ENCODE measurements at regions of chr1 and their contacts with region 1.

Region 1: DNA sequence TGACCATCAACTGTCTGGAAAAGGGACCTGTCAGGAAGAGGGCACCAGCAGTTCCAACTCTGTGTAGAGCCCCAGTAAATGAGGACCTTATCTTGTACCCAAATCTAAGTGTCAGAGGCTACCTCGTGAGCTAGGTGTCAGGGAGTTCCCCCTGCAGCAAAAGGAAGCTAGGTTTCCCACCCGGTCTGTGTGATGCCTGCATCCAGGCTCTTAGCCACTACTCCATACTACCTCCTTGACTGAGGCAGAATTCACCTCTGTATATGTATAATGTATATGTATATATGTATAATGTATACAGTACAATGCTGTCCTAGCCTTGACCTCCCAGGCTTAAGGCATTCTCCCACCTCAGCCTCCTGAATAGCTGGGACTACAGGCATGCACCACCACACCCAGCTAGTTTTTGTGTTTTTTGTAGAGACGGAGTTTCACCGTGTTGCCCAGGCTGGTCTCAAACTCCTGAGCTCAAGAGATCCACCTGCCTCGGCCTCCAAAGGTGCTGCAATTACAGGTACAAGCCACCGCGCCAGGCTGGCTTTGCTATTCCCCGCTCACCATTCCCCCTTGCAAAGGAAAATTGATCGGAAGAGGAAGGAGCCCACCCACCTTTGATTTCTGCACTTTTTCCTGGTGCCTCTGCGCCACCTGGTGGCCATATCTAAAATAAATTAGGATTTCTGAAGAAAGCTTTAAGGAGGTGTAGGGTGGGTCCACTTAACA is 15.7 kb upstream of the LUZP1 start:
- DNase-seq: no peak
- H3K4me3 ChIP-seq: no peak overlapping the region
- H3K27ac ChIP-seq: no peak overlapping the region
- H3K4me1 ChIP-seq: peaks cover 19% of the 10 kb centered on the region
- H3K27me3 ChIP-seq: no peaks in the 10 kb centered on the region
- CTCF ChIP-seq: peak; percentile 48 to 75

Region 2: DNA sequence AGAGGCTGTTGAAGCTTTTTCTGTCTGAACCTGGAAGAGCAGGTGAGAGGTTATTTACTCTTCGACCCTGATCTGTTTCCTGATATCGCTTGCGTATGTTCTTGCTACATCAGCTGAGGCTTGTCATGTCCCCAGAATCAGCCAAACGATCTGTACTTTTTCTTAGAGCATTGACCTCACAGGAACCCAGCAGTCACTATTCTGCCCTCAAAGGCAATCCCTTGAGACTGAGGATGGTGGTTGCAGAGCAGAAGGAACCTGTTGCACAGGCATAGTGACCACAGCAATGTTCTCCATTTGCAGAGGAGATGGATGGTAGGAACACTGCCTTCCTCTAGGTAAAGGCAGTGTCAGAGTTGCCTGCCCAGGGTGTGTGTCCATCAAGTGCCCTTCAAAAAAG is 200.4 kb before region 1 on chr1:
- CTCF ChIA-PET with region 1: no interaction called
- dilution Hi-C with region 1: loop called (anchors 5 kb)
- in situ Hi-C with region 1: loop called (anchors 5 to 10 kb)
- intact Hi-C with region 1: no loop called
- DNase-seq: no peak
- H3K4me3 ChIP-seq: no peak overlapping the region
- H3K27ac ChIP-seq: no peak overlapping the region
- H3K4me1 ChIP-seq: no peaks in the 10 kb centered on the region
- H3K27me3 ChIP-seq: no peaks in the 10 kb centered on the region
- CTCF ChIP-seq: no peak

Region 3: GRCh38 chr1:23098463-23099170 is 85.8 kb before region 1 on chr1:
- CTCF ChIA-PET with region 1: interaction called, 23 read pairs
- dilution Hi-C with region 1: no loop called
- in situ Hi-C with region 1: loop called (anchors 5 kb)
- intact Hi-C with region 1: loop called (anchors 1 kb)
- DNase-seq: peak; percentile 65
- H3K4me3 ChIP-seq: no peak overlapping the region
- H3K27ac ChIP-seq: no peak overlapping the region
- H3K4me1 ChIP-seq: peaks cover 59% of the 10 kb centered on the region
- H3K27me3 ChIP-seq: no peaks in the 10 kb centered on the region
- CTCF ChIP-seq: peak; percentile 92 to 93

Region 4: DNA sequence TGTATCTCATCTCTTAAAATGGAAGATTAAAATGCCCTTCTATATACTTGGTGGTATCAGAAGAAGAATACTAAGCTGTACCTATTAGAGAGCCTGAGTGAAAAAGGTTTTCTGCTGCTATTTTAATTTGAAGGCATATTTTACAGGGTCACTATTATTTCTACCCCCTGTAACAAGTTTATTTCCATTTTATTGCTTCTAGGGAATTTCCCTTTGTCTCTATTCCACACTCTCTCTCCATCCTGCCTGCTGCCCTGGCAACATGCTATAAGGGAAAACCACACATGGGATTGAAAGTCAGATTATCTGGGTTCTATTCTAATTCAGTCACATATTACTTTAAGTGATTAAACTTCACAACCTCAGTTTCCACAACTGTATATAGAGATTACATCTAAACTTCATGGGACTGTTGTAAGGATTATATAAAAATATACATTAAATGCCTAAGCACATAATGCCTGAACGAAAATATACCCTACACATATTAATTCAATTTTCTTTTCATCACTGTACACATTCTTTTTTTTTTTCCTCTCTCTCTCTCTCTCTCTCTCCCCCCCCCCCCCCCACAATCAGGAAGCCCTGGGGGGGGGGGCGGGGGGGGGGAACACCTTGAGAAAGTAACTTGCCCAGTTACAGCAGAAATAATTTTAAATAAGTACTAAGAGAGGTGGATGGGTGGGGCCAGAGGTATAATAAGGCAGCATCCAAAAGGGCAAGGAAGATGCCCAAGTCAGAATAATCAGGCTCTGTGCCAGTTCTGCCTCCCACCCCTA is 67.3 kb before region 1 on chr1:
- CTCF ChIA-PET with region 1: no interaction called
- dilution Hi-C with region 1: no loop called
- in situ Hi-C with region 1: no loop called
- intact Hi-C with region 1: no loop called
- DNase-seq: no peak
- H3K4me3 ChIP-seq: no peak overlapping the region
- H3K27ac ChIP-seq: no peak overlapping the region
- H3K4me1 ChIP-seq: peaks cover 21% of the 10 kb centered on the region
- H3K27me3 ChIP-seq: no peaks in the 10 kb centered on the region
- CTCF ChIP-seq: no peak

Region 5: DNA sequence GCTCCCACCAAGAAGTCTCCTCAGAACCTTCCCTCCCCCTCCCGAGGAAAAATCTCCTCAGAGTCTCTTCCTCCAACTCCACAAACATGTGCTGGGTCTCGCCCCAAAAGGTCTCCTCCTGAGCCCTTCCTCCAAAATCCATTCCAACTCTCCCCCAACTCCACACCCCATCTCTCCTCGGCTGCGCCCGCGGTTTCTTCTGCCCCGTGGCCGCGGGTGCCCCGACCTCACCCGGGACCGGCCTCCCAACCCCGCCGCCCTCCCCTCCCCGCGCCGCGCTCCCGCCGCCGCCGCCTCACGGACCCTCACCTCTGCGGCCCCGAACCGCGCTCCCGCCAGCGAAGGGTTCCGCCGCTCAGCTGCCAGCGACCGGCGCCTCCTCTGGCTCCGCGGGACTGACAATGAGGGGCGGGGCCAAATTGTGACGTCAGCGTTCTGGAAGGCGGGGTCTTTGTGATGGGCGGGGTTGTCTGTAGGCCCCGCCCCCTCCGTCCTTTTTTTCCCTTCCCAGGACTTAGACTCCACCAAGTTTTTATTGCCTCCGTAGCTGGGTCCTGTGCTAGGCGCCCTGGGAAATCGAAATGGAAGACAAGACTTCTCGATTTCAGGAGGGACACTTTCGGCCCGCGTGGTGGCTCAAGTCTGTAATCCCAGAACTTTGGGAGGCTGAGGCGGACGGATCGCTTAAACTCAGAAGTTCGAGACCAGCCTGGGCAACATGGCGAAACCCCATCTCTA is 15.7 kb before region 1 on chr1 and contains the start of gene LUZP1:
- CTCF ChIA-PET with region 1: no interaction called
- dilution Hi-C with region 1: no loop called
- in situ Hi-C with region 1: no loop called
- intact Hi-C with region 1: loop called (anchors 2 kb)
- DNase-seq: peak; percentile 80
- H3K4me3 ChIP-seq: peak within 1 kb of the TSS; percentile 66 to 99 (median 85)
- H3K27ac ChIP-seq: peak within 1 kb of the TSS; percentile 94
- H3K4me1 ChIP-seq: peaks cover 42% of the 10 kb centered on the region
- H3K27me3 ChIP-seq: no peaks in the 10 kb centered on the region
- CTCF ChIP-seq: no peak
- total RNA-seq, gene LUZP1: 55.2 to 83.2 TPM

Region 6: GRCh38 chr1:23210351-23210785 is 26.0 kb after region 1 on chr1:
- CTCF ChIA-PET with region 1: no interaction called
- dilution Hi-C with region 1: no loop called
- in situ Hi-C with region 1: no loop called
- intact Hi-C with region 1: loop called (anchors 1 kb)
- DNase-seq: peak; percentile 62
- H3K4me3 ChIP-seq: no peak overlapping the region
- H3K27ac ChIP-seq: no peak overlapping the region
- H3K4me1 ChIP-seq: peaks cover 17% of the 10 kb centered on the region
- H3K27me3 ChIP-seq: no peaks in the 10 kb centered on the region
- CTCF ChIP-seq: peak; percentile 12 to 32

Region 7: DNA sequence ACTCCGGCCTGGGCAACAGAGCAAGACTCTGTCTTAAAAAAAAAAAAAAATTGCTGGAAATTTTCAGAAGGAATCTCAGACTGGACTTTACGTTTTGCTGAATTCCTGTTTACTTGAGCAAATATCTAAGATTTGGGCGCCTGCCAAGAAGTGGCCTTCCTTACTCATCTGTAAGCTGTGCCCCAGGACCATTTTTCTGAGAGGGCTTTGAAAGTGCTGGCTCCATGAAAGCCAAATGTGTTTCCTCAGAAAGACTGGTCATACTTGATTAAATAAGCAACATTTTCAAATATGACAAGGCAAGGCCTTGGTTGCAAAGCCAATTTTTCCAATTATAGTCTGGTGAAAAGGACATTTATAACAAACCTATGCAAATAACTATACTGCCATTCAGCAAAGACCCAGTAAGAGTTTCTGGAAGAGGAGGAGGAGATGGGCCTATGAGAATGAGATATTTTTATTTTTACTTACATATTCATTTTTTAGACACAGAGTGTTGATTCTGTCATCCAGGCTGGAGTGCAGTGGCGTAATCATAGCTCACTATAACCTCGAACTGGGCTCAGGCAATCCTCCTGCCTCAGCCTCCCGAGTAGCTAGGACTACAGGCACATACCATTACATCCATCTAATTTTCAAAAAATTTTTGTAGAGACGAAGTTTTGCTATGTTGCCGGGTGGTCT is 89.2 kb after region 1 on chr1:
- CTCF ChIA-PET with region 1: no interaction called
- dilution Hi-C with region 1: no loop called
- in situ Hi-C with region 1: loop called in 1 of 2 experiments (anchors 10 kb)
- intact Hi-C with region 1: no loop called
- DNase-seq: peak; percentile 36
- H3K4me3 ChIP-seq: no peak overlapping the region
- H3K27ac ChIP-seq: no peak overlapping the region
- H3K4me1 ChIP-seq: peaks cover 4% of the 10 kb centered on the region
- H3K27me3 ChIP-seq: no peaks in the 10 kb centered on the region
- CTCF ChIP-seq: no peak